ENCODE measurements at regions of chr15 and their contacts with region 1.

Region 1: DNA sequence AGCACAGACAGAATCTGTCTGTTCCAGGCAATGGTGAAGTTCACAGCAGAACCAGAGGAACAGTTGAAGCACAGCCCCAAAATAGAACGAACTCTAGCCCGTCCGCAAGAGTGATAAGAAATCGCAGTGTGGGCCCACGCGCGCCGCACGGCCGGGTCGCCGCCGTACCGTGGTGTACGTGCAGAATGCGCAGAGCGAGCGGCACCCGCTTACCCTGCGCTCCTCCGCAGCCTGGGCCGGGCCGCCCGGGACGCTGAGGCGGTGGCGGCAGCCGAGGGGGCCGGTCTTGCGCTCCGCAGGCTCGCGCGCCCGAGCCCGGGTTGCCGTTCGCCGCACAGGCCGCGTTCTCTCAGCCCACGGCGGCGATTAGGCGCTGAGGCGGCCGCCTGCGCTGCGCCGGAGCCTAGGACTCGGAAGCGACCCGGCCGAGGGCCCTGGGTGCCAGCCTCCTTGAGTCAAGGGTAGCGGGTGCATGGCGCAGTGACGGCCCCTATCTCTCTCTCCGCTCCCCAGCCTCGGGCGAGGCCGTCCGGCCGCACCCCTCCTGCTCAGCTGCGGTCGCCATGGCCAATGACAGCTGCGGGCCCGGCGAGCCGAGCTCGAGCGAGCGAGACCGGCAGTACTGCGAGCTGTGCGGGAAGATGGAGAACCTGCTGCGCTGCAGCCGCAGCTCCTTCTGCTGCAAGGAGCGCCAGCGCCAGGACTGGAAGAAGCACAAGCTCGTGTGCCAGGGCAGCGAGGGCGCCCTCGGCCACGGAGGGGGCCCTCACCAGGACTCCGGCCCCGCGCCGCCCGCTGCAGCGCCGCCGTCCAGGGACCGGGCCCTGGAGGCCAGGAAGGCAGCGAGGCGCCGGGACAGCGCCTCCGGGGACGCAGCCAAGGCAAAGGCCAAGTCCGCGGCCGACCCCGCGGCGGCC is 20.5 kb downstream of the WDR73 start:
- DNase-seq: peak; percentile 48 to 77 (median 66)
- ATAC-seq: peak; percentile 67
- H3K4me3 ChIP-seq: peak overlapping the region; percentile 96
- H3K4me3 Mint-ChIP-seq: peak overlapping the region; percentile 84 to 99 (median 98)
- H3K27ac ChIP-seq: peak overlapping the region; percentile 78
- H3K27ac Mint-ChIP-seq: peak overlapping the region; percentile 79 to 98 (median 93)
- H3K4me1 ChIP-seq: peaks cover 26 to 40% of the 10 kb centered on the region in 2 donors
- H3K4me1 Mint-ChIP-seq: peaks cover 23 to 58% (median 53%) of the 10 kb centered on the region in 7 donors
- H3K27me3 ChIP-seq: no peaks in the 10 kb centered on the region
- H3K27me3 Mint-ChIP-seq: no peaks in the 10 kb centered on the region

Region 2: DNA sequence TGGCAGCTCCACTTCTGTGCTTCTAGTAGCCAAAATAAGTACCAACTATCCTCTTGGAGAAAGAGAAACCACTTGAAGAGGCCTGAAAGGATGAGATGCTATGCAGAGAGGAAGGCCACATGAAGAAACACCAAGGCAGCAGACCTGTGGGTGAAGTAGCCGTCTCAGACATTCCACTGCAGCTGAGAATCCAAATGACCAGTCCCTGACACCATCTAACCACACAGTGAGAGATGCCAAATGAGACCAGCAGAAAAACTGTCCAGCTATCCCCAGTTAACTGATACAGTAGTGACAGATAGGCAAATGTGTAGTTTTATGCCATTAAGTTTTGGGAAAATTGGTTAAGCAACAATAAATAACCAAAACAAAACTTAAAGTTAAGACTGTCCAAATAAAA is 80.7 kb before region 1 on chr15:
- CTCF ChIA-PET with region 1: no interaction called
- POLR2A ChIA-PET with region 1: no interaction called
- intact Hi-C with region 1: no loop called
- DNase-seq: no peak
- ATAC-seq: no peak
- H3K4me3 ChIP-seq: no peak overlapping the region
- H3K4me3 Mint-ChIP-seq: no peak overlapping the region
- H3K27ac ChIP-seq: no peak overlapping the region
- H3K27ac Mint-ChIP-seq: no peak overlapping the region
- H3K4me1 ChIP-seq: no peaks in the 10 kb centered on the region
- H3K4me1 Mint-ChIP-seq: peaks cover under 1 to 17% (median 7%) of the 10 kb centered on the region in 7 donors
- H3K27me3 ChIP-seq: no peaks in the 10 kb centered on the region
- H3K27me3 Mint-ChIP-seq: no peaks in the 10 kb centered on the region

Region 3: GRCh38 chr15:84600851-84601838 is 32.4 kb before region 1 on chr15 and contains the start of gene ZSCAN2:
- CTCF ChIA-PET with region 1: interaction called, 18 read pairs
- POLR2A ChIA-PET with region 1: interaction called, 115 read pairs
- intact Hi-C with region 1: loop called (anchors 1 kb)
- DNase-seq: peak; percentile 83 to 93 (median 90)
- ATAC-seq: peak; percentile 98
- H3K4me3 ChIP-seq: peak within 1 kb of the TSS; percentile 96
- H3K4me3 Mint-ChIP-seq: peak within 1 kb of the TSS; percentile 89 to 99 (median 96)
- H3K27ac ChIP-seq: peak within 1 kb of the TSS; percentile 77
- H3K27ac Mint-ChIP-seq: peak within 1 kb of the TSS; percentile 67 to 97 (median 88)
- H3K4me1 ChIP-seq: peaks cover 29 to 36% of the 10 kb centered on the region in 2 donors
- H3K4me1 Mint-ChIP-seq: peaks cover 53 to 89% (median 71%) of the 10 kb centered on the region in 7 donors
- H3K27me3 ChIP-seq: no peaks in the 10 kb centered on the region
- H3K27me3 Mint-ChIP-seq: no peaks in the 10 kb centered on the region
- total RNA-seq, gene ZSCAN2: 4.8 to 13.0 (median 6.8) TPM

Region 4: DNA sequence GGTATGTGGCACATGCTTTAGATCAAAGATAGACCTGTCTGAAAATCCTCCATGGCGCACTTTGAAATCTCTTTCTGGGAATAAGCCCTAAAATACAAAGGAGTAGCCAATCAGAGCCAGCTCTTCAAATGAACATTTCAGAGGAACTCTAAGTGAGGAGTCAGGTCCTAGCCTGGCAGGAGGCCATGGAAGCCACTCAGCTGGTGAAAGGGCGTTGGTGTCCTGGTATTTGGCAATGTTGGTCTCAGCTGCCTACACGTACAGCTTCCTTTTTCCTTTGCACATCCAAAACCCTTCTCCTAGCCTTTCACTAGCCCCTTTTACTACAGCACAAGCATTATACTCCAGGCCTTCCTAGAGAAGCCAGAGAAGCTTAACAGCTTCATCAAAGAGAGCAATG is 15.0 kb after region 1 on chr15:
- CTCF ChIA-PET with region 1: interaction called, 8 read pairs
- POLR2A ChIA-PET with region 1: interaction called, 41 read pairs
- intact Hi-C with region 1: no loop called
- DNase-seq: no peak
- ATAC-seq: no peak
- H3K4me3 ChIP-seq: no peak overlapping the region
- H3K4me3 Mint-ChIP-seq: no peak overlapping the region
- H3K27ac ChIP-seq: no peak overlapping the region
- H3K27ac Mint-ChIP-seq: peak overlapping the region in 5 of 9 donors; percentile 63 to 80 (median 78)
- H3K4me1 ChIP-seq: peaks cover 15 to 17% of the 10 kb centered on the region in 2 donors
- H3K4me1 Mint-ChIP-seq: peaks cover 15 to 31% (median 28%) of the 10 kb centered on the region in 7 donors
- H3K27me3 ChIP-seq: no peaks in the 10 kb centered on the region
- H3K27me3 Mint-ChIP-seq: no peaks in the 10 kb centered on the region

Region 5: GRCh38 chr15:84702961-84703482 is 69.5 kb after region 1 on chr15:
- CTCF ChIA-PET with region 1: no interaction called
- POLR2A ChIA-PET with region 1: no interaction called
- intact Hi-C with region 1: no loop called
- DNase-seq: no peak
- ATAC-seq: peak; percentile 40
- H3K4me3 ChIP-seq: no peak overlapping the region
- H3K4me3 Mint-ChIP-seq: peak overlapping the region in 3 of 10 donors; percentile 6 to 24 (median 7)
- H3K27ac ChIP-seq: no peak overlapping the region
- H3K27ac Mint-ChIP-seq: peak overlapping the region in 6 of 9 donors; percentile 9 to 86 (median 39)
- H3K4me1 ChIP-seq: peaks cover 0 to 24% of the 10 kb centered on the region in 2 donors
- H3K4me1 Mint-ChIP-seq: peaks cover 45 to 82% (median 75%) of the 10 kb centered on the region in 7 donors
- H3K27me3 ChIP-seq: no peaks in the 10 kb centered on the region
- H3K27me3 Mint-ChIP-seq: no peaks in the 10 kb centered on the region

Measured in naive thymus-derived CD4-positive, alpha-beta T cell (primary cell).